ENCODE measurements at regions of chr12 and their contacts with region 1.

Region 1: DNA sequence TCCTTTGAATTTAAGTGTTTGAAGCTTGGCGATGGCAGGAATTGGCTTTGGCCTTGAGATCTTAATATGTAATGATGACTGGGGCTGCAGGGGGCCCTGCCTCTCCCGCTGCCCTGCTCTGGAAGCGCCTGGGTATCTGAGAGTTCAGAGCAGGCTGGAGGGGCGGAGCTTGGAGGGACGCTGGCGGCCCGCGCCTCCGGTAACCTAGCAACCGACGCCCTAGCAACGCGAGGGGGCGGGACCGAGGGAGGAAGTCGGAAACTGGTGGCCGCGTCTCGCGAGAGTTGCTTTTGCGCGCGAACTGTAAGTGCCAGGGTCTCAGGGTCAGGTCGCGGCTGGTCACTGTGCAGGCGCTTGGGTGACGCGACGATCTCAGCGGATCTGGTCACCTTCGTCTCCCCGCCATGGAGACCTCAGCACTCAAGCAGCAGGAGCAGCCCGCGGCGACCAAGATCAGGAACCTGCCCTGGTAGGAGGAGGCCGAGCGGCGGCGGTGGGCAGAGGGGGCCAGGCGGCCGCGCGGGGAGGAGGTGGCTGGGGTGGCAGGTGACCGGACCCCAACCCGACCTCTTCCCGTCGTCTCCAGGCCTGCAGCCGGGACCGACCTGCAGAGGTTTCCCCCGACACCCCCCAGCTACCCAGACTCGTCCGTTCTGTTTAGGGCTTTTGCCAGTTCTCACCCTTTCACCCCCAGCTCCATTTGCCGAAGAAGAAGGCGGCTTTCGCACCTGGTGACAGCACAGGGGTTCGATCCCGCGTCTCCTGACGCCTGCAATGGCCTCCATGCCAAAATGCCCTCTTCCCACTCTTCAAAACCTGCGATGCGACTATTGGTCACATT is at the start of gene RFC5:
- DNase-seq: peak; percentile 99
- H3K4me3 Mint-ChIP-seq: peak within 1 kb of the TSS; percentile 98
- H3K27ac Mint-ChIP-seq: peak within 1 kb of the TSS; percentile 94
- H3K4me1 Mint-ChIP-seq: peaks cover 17% of the 10 kb centered on the region
- H3K27me3 Mint-ChIP-seq: peaks cover 7% of the 10 kb centered on the region
- total RNA-seq, gene RFC5: 82.9 and 84.4 TPM in 2 replicates

Region 2: GRCh38 chr12:117968826-117969659 is 47.6 kb before region 1 on chr12 and contains the start of gene KSR2:
- intact Hi-C with region 1: loop called (anchors 5 kb)
- DNase-seq: peak; percentile 79
- H3K4me3 Mint-ChIP-seq: peak within 1 kb of the TSS; percentile 85
- H3K27ac Mint-ChIP-seq: peak within 1 kb of the TSS; percentile 36
- H3K4me1 Mint-ChIP-seq: peaks cover 9% of the 10 kb centered on the region
- H3K27me3 Mint-ChIP-seq: peaks cover 39% of the 10 kb centered on the region
- total RNA-seq, gene KSR2: 0.02 and 0.05 TPM in 2 replicates

Region 3: GRCh38 chr12:118035246-118036041 is 18.8 kb after region 1 on chr12:
- intact Hi-C with region 1: loop called (anchors 1 kb)
- DNase-seq: no peak
- H3K4me3 Mint-ChIP-seq: peak overlapping the region; percentile 57
- H3K27ac Mint-ChIP-seq: peak overlapping the region; percentile 99
- H3K4me1 Mint-ChIP-seq: peaks cover 46% of the 10 kb centered on the region
- H3K27me3 Mint-ChIP-seq: peaks cover 2% of the 10 kb centered on the region

Region 4: GRCh38 chr12:118044075-118044474 is 27.4 kb after region 1 on chr12:
- intact Hi-C with region 1: loop called (anchors 1 kb)
- DNase-seq: no peak
- H3K4me3 Mint-ChIP-seq: peak overlapping the region; percentile 66
- H3K27ac Mint-ChIP-seq: peak overlapping the region; percentile 95
- H3K4me1 Mint-ChIP-seq: peaks cover 48% of the 10 kb centered on the region
- H3K27me3 Mint-ChIP-seq: no peaks in the 10 kb centered on the region

Region 5: DNA sequence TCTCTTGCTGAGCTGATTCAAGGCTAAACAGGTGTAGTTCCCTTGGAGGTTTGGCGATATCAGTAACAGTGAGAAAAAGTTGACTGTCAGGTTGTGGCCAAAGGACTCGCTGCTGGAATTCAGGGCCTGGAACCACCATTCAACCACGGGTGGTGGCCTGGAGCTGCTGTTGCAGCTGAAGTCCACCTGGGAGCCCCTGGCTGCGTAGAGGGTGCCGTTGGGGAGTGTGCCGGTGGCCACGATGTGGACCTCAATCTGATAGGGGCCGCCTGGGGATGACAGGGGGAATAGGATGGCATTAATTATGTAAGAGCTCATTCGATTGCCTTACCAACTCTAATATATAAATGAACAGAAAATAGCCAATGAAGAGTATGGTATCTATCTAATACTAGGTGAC is 65.5 kb after region 1 on chr12:
- intact Hi-C with region 1: no loop called
- DNase-seq: no peak
- H3K4me3 Mint-ChIP-seq: no peak overlapping the region
- H3K27ac Mint-ChIP-seq: no peak overlapping the region
- H3K4me1 Mint-ChIP-seq: no peaks in the 10 kb centered on the region
- H3K27me3 Mint-ChIP-seq: no peaks in the 10 kb centered on the region

Region 6: GRCh38 chr12:118135788-118136558 is 119.3 kb after region 1 on chr12 and contains the start of gene PEBP1:
- intact Hi-C with region 1: loop called (anchors 1 kb)
- DNase-seq: peak; percentile 99
- H3K4me3 Mint-ChIP-seq: peak within 1 kb of the TSS; percentile 99
- H3K27ac Mint-ChIP-seq: peak within 1 kb of the TSS; percentile 95
- H3K4me1 Mint-ChIP-seq: peaks cover 24% of the 10 kb centered on the region
- H3K27me3 Mint-ChIP-seq: no peaks in the 10 kb centered on the region
- total RNA-seq, gene PEBP1: 206 and 209 TPM in 2 replicates